ENCODE measurements at regions of chrX and their contacts with region 1.

Region 1: GRCh38 chrX:16695079-16695676 is 17.3 kb downstream of the CTPS2 start:
- DNase-seq: peak; percentile 63 to 71
- ATAC-seq: peak; percentile 48 to 78 (median 66)
- H3K4me3 ChIP-seq: no peak overlapping the region
- H3K27ac ChIP-seq: no peak overlapping the region
- H3K4me1 ChIP-seq: no peaks in the 10 kb centered on the region
- H3K27me3 ChIP-seq: no peaks in the 10 kb centered on the region
- CTCF ChIP-seq: peak; percentile 93

Region 2: DNA sequence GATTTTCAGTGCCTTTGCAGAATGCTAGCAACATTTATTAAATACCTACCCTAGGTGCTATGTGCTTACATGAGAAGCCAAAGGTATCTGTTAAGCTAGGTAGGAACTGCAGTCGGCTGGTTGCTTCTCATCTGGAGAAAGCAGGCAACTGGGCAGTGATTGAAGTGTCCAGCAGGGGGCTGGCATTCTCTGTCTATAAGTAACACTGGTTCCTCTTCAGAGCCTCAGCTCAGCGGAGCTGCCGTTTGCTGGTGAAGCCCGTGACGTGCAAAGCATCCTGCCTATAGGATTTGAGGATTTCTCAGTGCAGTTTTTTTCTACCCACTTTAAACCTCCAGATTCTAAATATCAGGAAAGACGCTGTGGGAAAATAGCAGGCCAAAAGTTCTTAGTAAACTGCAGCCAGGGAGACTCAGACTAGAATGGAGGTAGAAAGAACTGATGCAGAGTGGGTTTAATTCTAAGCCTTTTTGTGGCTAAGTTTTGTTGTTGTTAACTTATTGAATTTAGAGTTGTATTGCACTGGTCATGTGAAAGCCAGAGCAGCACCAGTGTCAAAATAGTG is 571.9 kb before region 1 on chrX and contains the start of gene GRPR:
- intact Hi-C with region 1: loop called in 1 of 2 experiments (anchors 10 kb)
- DNase-seq: peak; percentile 61 to 72
- ATAC-seq: peak; percentile 73 to 87 (median 83)
- H3K4me3 ChIP-seq: no peak within 1 kb of the TSS
- H3K27ac ChIP-seq: no peak within 1 kb of the TSS
- H3K4me1 ChIP-seq: no peaks in the 10 kb centered on the region
- H3K27me3 ChIP-seq: peaks cover 0 to 4% (median 0%) of the 10 kb centered on the region in 3 donors
- CTCF ChIP-seq: peak; percentile 79
- total RNA-seq, gene GRPR: 0.32 to 0.60 (median 0.36) TPM

Measured in psoas muscle (tissue), 8 donors.